ENCODE measurements at regions of chr5 and their contacts with region 1.

Region 1: GRCh38 chr5:62143268-62144229 is 162.5 kb upstream of the KIF2A start:
- H3K4me3 Mint-ChIP-seq: no peak overlapping the region
- H3K27ac Mint-ChIP-seq: no peak overlapping the region
- H3K4me1 Mint-ChIP-seq: no peaks in the 10 kb centered on the region
- H3K27me3 Mint-ChIP-seq: peaks cover 7% of the 10 kb centered on the region

Region 2: DNA sequence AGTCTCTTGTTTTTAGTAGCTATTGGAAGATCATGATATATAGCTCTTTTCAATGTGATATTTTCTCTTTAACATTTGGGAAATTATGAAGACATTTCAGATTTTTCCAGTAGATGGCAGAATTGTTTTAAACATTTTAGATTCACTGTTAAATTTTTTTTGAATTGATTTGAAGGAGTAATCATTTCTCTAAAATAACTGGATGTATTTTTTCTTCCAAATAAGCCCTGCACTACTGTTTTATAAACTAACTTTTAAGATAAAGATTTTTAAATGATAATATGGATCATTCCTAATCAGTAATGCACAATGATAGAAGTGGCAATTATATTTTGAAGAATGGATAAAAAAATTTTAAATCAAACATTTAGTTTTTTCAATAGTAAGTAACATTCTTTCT is 1184.4 kb before region 1 on chr5:
- intact Hi-C with region 1: loop called (anchors 5 kb)
- H3K4me3 Mint-ChIP-seq: no peak overlapping the region
- H3K27ac Mint-ChIP-seq: no peak overlapping the region
- H3K4me1 Mint-ChIP-seq: no peaks in the 10 kb centered on the region
- H3K27me3 Mint-ChIP-seq: no peaks in the 10 kb centered on the region

Region 3: GRCh38 chr5:62051747-62052146 is 91.8 kb before region 1 on chr5:
- intact Hi-C with region 1: no loop called
- H3K4me3 Mint-ChIP-seq: no peak overlapping the region
- H3K27ac Mint-ChIP-seq: no peak overlapping the region
- H3K4me1 Mint-ChIP-seq: no peaks in the 10 kb centered on the region
- H3K27me3 Mint-ChIP-seq: no peaks in the 10 kb centered on the region

Region 4: DNA sequence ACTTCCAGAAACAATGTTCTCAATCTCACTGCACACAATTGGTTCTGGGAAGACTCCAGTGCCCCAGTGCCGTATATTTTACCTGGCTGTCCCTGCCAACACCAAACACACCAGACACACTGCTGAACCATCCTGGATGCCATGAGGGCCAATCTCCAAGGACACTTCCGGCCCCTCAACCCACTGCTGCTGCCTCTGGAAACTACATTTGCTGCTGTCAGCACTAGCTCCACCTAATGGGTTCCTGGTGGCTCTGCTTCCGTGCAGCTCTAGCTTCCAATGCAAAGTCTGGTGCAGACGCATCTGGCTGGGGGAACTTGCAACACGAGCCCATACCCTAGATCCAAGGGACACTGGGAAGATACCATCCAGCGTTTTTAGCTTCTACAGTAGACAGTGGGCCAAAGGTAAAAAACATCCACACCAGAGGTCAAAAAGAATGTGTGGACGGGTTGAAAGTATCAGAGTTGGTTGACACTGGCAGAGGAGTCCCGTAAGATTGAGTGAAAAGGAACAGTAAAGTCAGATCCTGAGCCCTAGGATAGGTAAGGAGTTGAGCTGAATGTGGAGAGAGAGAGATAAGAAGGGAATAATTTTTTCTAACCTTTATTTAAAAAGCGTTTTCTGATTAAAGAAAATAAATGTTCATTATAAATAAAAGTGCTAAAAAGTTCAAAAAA is 62.7 kb after region 1 on chr5:
- intact Hi-C with region 1: no loop called
- H3K4me3 Mint-ChIP-seq: no peak overlapping the region
- H3K27ac Mint-ChIP-seq: no peak overlapping the region
- H3K4me1 Mint-ChIP-seq: no peaks in the 10 kb centered on the region
- H3K27me3 Mint-ChIP-seq: no peaks in the 10 kb centered on the region

Region 5: GRCh38 chr5:62340392-62340791 is 196.8 kb after region 1 on chr5:
- intact Hi-C with region 1: no loop called
- H3K4me3 Mint-ChIP-seq: no peak overlapping the region
- H3K27ac Mint-ChIP-seq: no peak overlapping the region
- H3K4me1 Mint-ChIP-seq: peaks cover 7% of the 10 kb centered on the region
- H3K27me3 Mint-ChIP-seq: no peaks in the 10 kb centered on the region

Measured in dendritic cell treated with granulocyte-macrophage colony-stimulating factor and Interleukin-4, amounts not matched to agents 40 ng/mL and 50 ng/mL, for 4 days (primary cell).